ENCODE measurements at regions of chr16 and their contacts with region 1.

Region 1: GRCh38 chr16:67521095-67521804 is 7.4 kb upstream of the RIPOR1 start:
- DNase-seq: peak; percentile 90 to 98 (median 94)
- H3K4me3 ChIP-seq: peak overlapping the region; percentile 35 to 73 (median 59)
- H3K27ac ChIP-seq: peak overlapping the region; percentile 16 to 98 (median 91)
- H3K27me3 ChIP-seq: no peaks in the 10 kb centered on the region
- CTCF ChIP-seq: peak; percentile 70 to 97 (median 84)

Region 2: DNA sequence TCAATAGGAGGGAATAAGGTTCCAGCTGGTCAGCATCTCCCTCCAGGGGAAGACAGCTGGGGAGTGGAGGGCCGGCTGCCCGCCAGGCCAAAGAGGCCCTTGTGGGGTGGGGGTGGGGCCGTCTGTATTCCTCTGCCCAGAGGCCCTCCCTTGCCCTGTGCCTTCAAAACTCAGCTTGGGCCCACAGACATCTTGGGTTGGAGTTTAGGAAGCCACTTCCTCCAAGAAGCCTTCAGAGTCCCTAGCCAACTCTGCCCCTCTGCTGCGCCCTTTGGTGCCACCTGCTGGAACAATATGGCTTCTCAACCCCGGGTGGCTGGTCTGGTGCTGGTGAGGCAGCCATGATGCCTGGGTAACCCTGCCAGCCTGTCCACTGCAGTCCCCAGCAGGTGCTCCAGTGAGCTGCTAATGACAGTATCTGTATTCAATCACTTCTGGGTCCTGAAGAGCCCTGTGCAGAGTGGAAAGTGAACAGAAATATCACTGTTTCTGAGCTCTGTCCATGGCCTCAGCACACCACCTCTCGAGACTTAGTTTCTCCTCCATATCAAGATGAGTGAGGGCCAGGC is 73.7 kb before region 1 on chr16:
- intact Hi-C with region 1: no loop called
- DNase-seq: no peak
- H3K4me3 ChIP-seq: no peak overlapping the region
- H3K27ac ChIP-seq: peak overlapping the region in 5 of 59 donors; percentile 15 to 84 (median 22)
- H3K27me3 ChIP-seq: no peaks in the 10 kb centered on the region
- CTCF ChIP-seq: peak in 42 of 56 donors; percentile 13 to 52 (median 36)

Region 3: GRCh38 chr16:67480833-67481560 is 40.3 kb before region 1 on chr16 and contains the start of gene ATP6V0D1:
- intact Hi-C with region 1: loop called in 1 of 2 experiments (anchors 5 kb)
- DNase-seq: peak; percentile 95 to 99 (median 98)
- H3K4me3 ChIP-seq: peak within 1 kb of the TSS; percentile 60 to 100 (median 96)
- H3K27ac ChIP-seq: peak within 1 kb of the TSS; percentile 21 to 99 (median 92)
- H3K27me3 ChIP-seq: no peaks in the 10 kb centered on the region
- CTCF ChIP-seq: peak; percentile 83 to 100 (median 95)
- total RNA-seq, gene ATP6V0D1: 97.6 to 219 (median 177) TPM

Region 4: DNA sequence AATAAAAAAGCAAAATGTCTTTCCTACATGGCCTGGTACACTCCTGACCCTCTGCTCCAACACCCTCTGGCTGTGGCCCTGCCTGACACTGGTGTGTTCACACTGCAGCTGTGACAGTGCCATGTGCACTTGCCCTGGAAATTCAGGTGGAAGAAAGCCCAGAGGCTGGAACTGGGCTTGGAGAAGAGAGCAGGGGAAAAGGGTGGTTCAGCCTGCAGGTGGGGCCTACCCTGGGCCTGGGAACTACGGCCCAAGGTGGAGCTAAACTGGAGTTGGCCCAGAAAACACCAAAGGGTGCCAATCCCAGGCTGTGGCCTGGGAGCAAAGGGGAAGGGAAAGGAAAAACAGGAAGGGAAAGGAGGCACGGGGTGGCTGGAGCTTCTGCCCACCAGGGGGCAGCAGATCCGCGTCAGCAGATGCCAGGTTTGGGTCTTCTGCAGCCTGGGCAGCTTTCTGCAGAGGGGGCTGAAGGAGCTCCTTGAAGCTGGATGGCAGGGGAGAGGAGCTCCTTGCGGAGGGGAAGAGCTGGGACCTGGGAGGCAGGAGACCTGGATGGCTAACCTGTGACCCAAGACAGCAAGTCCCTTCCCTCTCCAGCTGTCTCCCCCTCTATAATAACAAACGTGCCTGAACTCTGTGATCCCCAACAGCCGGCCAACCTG is 25.6 kb after region 1 on chr16:
- intact Hi-C with region 1: loop called in 1 of 2 experiments (anchors 2 kb)
- DNase-seq: peak in 7 of 10 donors; percentile 64 to 80 (median 71)
- H3K4me3 ChIP-seq: peak overlapping the region in 1 of 59 donors; percentile 9
- H3K27ac ChIP-seq: peak overlapping the region in 53 of 59 donors; percentile 1 to 80 (median 60)
- H3K27me3 ChIP-seq: no peaks in the 10 kb centered on the region
- CTCF ChIP-seq: peak; percentile 79 to 98 (median 92)

Region 5: GRCh38 chr16:67561824-67562525 is 40.7 kb after region 1 on chr16:
- intact Hi-C with region 1: loop called (anchors 1 to 2 kb)
- DNase-seq: peak; percentile 79 to 93 (median 88)
- H3K4me3 ChIP-seq: peak overlapping the region; percentile 40 to 100 (median 92)
- H3K27ac ChIP-seq: peak overlapping the region; percentile 31 to 100 (median 99)
- H3K27me3 ChIP-seq: no peaks in the 10 kb centered on the region
- CTCF ChIP-seq: peak in 21 of 56 donors; percentile 6 to 46 (median 23)

Region 6: GRCh38 chr16:67667817-67668494 is 146.7 kb after region 1 on chr16:
- intact Hi-C with region 1: loop called (anchors 1 to 2 kb)
- DNase-seq: peak; percentile 71 to 93 (median 90)
- H3K4me3 ChIP-seq: peak overlapping the region; percentile 67 to 97 (median 81)
- H3K27ac ChIP-seq: peak overlapping the region; percentile 42 to 98 (median 92)
- H3K27me3 ChIP-seq: no peaks in the 10 kb centered on the region
- CTCF ChIP-seq: peak in 55 of 56 donors; percentile 56 to 92 (median 83)

Region 7: GRCh38 chr16:67833418-67834241 is 312.4 kb after region 1 on chr16:
- intact Hi-C with region 1: loop called in 1 of 2 experiments (anchors 10 kb)
- DNase-seq: peak; percentile 90 to 96 (median 94)
- H3K4me3 ChIP-seq: peak overlapping the region; percentile 50 to 100 (median 84)
- H3K27ac ChIP-seq: peak overlapping the region; percentile 10 to 94 (median 81)
- H3K27me3 ChIP-seq: no peaks in the 10 kb centered on the region
- CTCF ChIP-seq: peak in 35 of 56 donors; percentile 14 to 62 (median 33)

Region 8: GRCh38 chr16:67928561-67929364 is 407.5 kb after region 1 on chr16:
- intact Hi-C with region 1: loop called in 1 of 2 experiments (anchors 10 kb)
- DNase-seq: peak; percentile 73 to 86 (median 82)
- H3K4me3 ChIP-seq: no peak overlapping the region
- H3K27ac ChIP-seq: peak overlapping the region in 50 of 59 donors; percentile 4 to 98 (median 92)
- H3K27me3 ChIP-seq: no peaks in the 10 kb centered on the region
- CTCF ChIP-seq: peak; percentile 53 to 96 (median 91)

Measured in dorsolateral prefrontal cortex (tissue), 120 donors.